ENCODE measurements at regions of chr1 and their contacts with region 1.

Region 1: GRCh38 chr1:28329395-28330153 is 734 bp downstream of the MED18 start:
- DNase-seq: peak; percentile 33
- ATAC-seq: peak; percentile 31 to 52

Region 2: GRCh38 chr1:28248283-28249012 is 81.1 kb before region 1 on chr1:
- intact Hi-C with region 1: loop called in 1 of 2 experiments (anchors 5 kb)
- DNase-seq: peak; percentile 81
- ATAC-seq: peak; percentile 49 to 69

Region 3: DNA sequence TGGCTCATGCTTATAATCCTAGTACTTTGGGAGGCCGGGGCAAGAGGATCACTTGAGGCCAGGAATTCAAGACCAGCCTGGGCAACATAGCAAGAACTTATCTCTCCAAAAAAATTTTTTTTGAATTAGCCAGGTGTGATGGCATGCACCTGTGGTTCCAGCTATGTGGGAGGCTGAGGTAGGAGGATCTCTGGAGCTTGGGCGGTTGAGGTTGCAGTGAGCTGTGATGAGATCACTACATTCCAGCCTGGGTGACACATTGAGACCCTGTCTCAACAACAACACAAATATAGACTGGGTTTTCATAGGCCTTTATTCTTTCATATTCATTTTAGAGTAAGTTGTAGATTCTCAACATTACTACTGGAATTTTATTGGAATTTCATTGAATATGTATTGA is 12.0 kb after region 1 on chr1:
- intact Hi-C with region 1: no loop called
- DNase-seq: no peak
- ATAC-seq: no peak

Region 4: DNA sequence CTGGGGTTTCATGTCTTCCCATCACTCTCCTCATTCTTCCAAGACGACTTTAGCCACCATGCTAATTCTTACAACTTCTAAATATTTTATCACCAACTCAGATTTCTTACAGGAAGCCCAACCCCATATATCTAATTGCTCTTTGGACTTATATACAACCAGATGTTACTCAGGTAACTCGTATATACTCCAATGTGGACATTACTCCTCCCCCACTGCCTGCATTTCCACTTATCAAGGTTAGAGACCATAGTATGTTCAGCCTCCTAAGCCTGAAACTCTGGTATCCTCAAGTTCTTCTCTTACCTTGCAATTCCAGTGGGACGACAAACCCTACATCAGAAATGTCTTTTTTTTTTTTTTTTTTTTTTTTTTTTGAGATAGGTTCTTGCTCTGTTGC is 173.5 kb after region 1 on chr1:
- intact Hi-C with region 1: no loop called
- DNase-seq: no peak
- ATAC-seq: no peak

Measured in left cardiac atrium (tissue), 4 donors.